PC-9 (cell line): ENCODE measurements at regions of chr19 and their contacts with region 1.

Region 1: DNA sequence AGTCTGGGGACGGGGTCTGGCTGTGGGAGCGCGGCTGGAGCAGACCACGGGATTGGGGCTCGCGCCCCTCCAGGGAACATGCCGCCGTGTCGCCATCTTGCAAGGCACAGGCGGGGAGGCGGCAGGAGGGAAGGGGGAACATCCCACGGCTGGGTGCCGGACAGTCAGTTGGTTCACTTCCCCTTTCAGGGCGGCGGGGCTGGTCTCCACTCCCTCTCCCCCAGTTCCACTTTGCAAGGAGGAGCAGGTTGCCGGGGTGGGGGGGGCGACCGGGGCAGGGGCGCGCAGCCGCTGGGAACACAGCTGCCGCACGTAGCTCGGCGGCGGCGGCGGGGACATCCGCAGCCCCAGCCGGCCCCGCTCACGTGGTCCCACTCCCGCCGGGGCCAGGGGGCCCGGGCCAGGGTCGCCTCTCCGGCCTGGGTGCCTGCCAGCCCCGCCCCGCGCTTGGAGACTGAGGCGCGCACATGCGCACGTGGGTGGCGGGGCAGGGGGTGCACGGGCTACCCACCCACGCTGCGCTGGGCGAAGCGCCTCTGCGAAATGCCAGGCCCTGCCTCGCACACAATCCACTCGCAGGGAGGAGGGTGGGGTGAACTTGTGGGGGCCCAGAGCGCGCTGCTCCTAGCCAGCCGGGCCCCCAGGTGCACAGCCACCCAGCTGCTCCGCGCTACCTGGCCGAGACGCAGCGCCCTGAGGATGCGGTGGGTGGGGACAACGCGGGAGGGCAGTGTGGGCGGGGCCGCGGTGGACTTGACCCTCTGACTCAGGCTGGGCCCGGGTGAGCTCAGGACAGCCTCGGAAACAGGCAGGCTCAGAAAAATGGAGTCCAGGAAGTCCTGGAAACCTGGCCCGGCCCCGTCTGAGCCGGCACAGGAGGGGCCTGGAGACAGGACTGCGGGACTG is 6.4 kb downstream of the KLF16 start:
- DNase-seq: peak in 1 of 2 experiments; percentile 72
- H3K4me3 ChIP-seq: no peak overlapping the region
- H3K27ac ChIP-seq: no peak overlapping the region
- H3K4me1 ChIP-seq: peaks cover 20% of the 10 kb centered on the region
- H3K27me3 ChIP-seq: no peaks in the 10 kb centered on the region
- CTCF ChIP-seq: no peak

Region 2: DNA sequence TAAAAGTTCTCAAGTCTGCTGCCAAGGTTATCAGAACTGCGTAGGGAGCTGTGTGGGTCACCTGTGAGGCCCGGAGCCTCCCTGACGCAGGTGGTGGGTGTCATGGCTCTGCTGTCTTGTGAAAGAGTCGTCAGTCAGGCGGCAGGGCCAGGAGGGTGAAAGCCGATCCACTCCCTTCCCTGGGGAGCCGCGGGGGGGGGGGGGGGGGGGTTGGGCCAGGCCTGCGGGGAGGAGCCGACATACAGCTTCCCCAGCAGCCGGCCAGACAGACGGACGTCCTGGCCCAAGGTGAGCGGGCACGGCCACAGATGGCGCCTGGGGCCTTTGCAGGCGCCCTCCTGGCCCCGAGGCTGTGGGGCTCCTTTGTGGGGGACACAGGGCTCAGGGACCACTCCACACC is 695.2 kb before region 1 on chr19:
- CTCF ChIA-PET with region 1: no interaction called
- POLR2A ChIA-PET with region 1: interaction called, 15 read pairs
- intact Hi-C with region 1: no loop called
- DNase-seq: peak; percentile 73 to 74
- H3K4me3 ChIP-seq: no peak overlapping the region
- H3K27ac ChIP-seq: no peak overlapping the region
- H3K4me1 ChIP-seq: peaks cover 13% of the 10 kb centered on the region
- H3K27me3 ChIP-seq: no peaks in the 10 kb centered on the region
- CTCF ChIP-seq: no peak

Region 3: GRCh38 chr19:2027361-2027760 is 170.4 kb after region 1 on chr19:
- CTCF ChIA-PET with region 1: no interaction called
- POLR2A ChIA-PET with region 1: interaction called, 22 read pairs
- intact Hi-C with region 1: no loop called
- DNase-seq: no peak
- H3K4me3 ChIP-seq: no peak overlapping the region
- H3K27ac ChIP-seq: no peak overlapping the region
- H3K4me1 ChIP-seq: peaks cover 15% of the 10 kb centered on the region
- H3K27me3 ChIP-seq: no peaks in the 10 kb centered on the region
- CTCF ChIP-seq: no peak